ENCODE measurements at regions of chr19 and their contacts with region 1.

Region 1: DNA sequence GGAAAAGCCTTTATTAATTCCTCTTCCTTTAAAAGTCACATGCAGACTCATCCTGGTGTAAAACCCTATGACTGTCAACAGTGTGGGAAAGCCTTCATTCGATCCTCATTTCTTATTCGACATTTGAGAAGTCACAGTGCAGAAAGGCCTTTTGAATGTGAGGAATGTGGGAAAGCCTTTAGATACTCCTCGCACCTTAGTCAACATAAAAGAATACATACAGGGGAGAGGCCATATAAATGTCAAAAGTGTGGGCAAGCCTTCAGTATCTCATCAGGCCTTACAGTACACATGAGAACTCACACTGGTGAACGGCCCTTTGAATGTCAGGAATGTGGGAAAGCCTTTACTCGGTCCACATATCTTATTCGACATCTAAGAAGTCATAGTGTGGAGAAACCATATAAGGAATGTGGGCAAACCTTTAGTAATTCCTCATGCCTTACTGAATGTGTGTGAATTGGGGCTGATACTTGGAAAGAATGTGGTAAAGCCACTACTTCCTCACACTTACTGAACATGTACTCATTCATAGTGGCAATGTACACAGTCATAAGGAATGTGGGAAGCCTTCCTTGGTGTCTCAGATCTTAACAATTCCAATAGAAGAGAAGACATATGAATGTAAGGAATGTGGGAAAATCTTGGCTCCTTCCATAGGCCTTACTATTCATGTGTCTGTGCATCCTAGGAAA is 18.8 kb downstream of the ZNF559 start:
- DNase-seq: no peak
- ATAC-seq: no peak

Region 2: GRCh38 chr19:9381367-9381785 is 38.6 kb after region 1 on chr19:
- intact Hi-C with region 1: loop called (anchors 5 kb)
- DNase-seq: no peak
- ATAC-seq: no peak